IMR-90 (cell line): ENCODE measurements at regions of chr9 and their contacts with region 1.

Region 1: GRCh38 chr9:82456642-82457041 is 468.1 kb downstream of the SPATA31D1 start:
- DNase-seq: peak; percentile 76
- ATAC-seq: peak; percentile 82
- H3K4me3 ChIP-seq: no peak overlapping the region
- H3K27ac ChIP-seq: no peak overlapping the region
- H3K4me1 ChIP-seq: peaks cover 3% of the 10 kb centered on the region; the same call in 1 of the 2 replicates
- H3K27me3 ChIP-seq: no peaks in the 10 kb centered on the region
- CTCF ChIP-seq: no peak
- POLR2A ChIP-seq: no peak
- RAD21 ChIP-seq: no peak

Region 2: DNA sequence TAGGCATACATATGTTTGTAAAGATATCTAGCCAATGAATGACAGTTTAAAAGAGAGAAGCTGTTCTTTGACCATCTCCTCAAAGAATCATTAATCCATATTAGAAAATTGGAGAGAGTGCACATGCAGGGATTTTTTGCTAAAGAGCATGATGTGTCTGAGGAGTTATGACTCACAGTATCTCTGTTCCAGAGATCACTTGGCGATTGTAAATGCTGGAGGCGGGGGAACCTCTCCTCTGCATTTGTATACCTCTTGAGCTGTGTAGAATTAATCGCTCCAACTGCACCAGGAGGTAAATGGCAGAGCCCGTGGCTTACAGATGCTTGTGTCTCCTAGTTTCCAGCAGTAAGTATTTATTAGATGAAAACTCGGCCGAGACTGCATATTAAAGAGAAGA is 471.7 kb before region 1 on chr9:
- CTCF ChIA-PET with region 1: no interaction called
- POLR2A ChIA-PET with region 1: no interaction called
- dilution Hi-C with region 1: no loop called
- in situ Hi-C with region 1: no loop called
- intact Hi-C with region 1: loop called (anchors 5 kb)
- DNase-seq: peak; percentile 53
- ATAC-seq: no peak; the same call in 1 of the 2 replicates
- H3K4me3 ChIP-seq: no peak overlapping the region
- H3K27ac ChIP-seq: no peak overlapping the region
- H3K4me1 ChIP-seq: peaks cover 1% of the 10 kb centered on the region; the same call in 1 of the 2 replicates
- H3K27me3 ChIP-seq: peaks cover 2% of the 10 kb centered on the region; the same call in 1 of the 2 replicates
- CTCF ChIP-seq: no peak
- POLR2A ChIP-seq: no peak
- RAD21 ChIP-seq: no peak

Region 3: DNA sequence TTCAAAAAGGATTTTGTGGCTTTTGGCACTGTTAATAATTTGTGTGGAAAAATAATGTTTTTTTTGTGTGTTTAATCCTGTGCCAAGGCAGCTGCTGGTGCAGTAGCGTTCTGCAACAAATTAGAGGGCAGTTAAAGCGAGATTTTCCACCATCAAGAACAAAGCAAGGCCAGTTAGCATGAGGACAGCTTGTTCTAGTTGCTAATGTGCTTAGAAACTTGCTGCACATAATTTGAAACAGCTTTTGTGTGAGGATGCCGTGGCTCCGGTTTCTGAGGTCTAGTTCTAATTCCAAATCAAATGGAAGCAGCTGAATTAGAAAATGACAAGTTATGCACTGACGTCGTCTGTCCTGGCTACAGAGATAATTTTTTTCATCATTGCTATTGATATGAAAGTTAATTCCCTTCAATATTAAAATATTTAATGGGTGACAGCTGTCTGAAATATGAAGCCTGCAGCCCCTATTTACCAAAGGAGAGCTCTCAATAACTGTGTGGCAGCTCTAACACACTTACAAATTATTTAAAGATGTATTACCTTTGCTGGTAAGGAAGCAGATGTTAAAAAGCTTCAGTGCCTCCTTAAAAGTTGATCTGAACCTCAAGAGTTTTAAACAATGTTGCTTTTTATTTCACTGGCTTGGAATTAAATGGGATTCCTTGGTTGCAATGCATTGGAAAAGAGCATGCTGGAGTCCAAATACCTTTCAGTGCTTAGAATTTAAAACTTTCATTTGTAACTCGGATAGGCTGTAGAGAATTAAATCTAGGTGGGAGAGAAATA is 339.4 kb before region 1 on chr9:
- CTCF ChIA-PET with region 1: no interaction called
- POLR2A ChIA-PET with region 1: no interaction called
- dilution Hi-C with region 1: no loop called
- in situ Hi-C with region 1: no loop called
- intact Hi-C with region 1: no loop called
- DNase-seq: no peak
- ATAC-seq: no peak
- H3K4me3 ChIP-seq: no peak overlapping the region
- H3K27ac ChIP-seq: no peak overlapping the region
- H3K4me1 ChIP-seq: no peaks in the 10 kb centered on the region; the same call in 1 of the 2 replicates
- H3K27me3 ChIP-seq: no peaks in the 10 kb centered on the region
- CTCF ChIP-seq: no peak
- POLR2A ChIP-seq: no peak
- RAD21 ChIP-seq: no peak